Astrocyte of the cerebellum (primary cell): ENCODE measurements at regions of chr17 and their contacts with region 1.

Region 1: GRCh38 chr17:32671896-32672295 is 185.1 kb downstream of the CDK5R1 start:
- DNase-seq: no peak
- H3K4me3 ChIP-seq: no peak overlapping the region
- CTCF ChIP-seq: no peak

Region 2: GRCh38 chr17:32631341-32632096 is 40.4 kb before region 1 on chr17:
- in situ Hi-C with region 1: loop called (anchors 5 kb)
- DNase-seq: no peak
- H3K4me3 ChIP-seq: no peak overlapping the region
- CTCF ChIP-seq: no peak

Region 3: DNA sequence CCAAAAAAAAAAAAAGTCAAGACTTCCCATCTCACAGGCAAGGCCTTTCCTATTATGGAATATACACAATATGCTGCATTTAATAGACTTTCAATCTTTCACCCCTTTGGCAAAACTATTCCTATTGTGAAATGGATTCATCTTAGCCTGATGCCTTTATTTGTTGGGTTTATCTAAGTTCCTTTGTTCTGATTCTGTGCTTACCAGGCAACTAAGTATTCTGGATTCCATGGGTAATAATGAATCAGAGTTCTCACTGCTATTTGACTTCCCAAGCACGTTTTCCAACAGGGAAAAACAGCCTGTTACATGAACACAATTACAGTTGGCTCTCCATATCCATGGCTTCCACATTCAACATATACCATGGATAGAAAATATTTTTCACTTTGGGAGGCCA is 69.5 kb after region 1 on chr17:
- in situ Hi-C with region 1: no loop called
- DNase-seq: no peak
- H3K4me3 ChIP-seq: no peak overlapping the region
- CTCF ChIP-seq: no peak